ENCODE measurements at regions of chr9 and their contacts with region 1.

Region 1: GRCh38 chr9:6827439-6827838 is 69.7 kb downstream of the KDM4C start:
- DNase-seq: peak; percentile 16
- ATAC-seq: peak; percentile 81
- H3K4me3 ChIP-seq: no peak overlapping the region
- H3K27ac ChIP-seq: no peak overlapping the region
- H3K4me1 ChIP-seq: no peaks in the 10 kb centered on the region
- H3K27me3 ChIP-seq: no peaks in the 10 kb centered on the region
- CTCF ChIP-seq: peak; percentile 36 to 60 (median 47); a peak in 5 of 6 replicates
- EP300 ChIP-seq: no peak
- POLR2A ChIP-seq: no peak
- RAD21 ChIP-seq: peak; percentile 82

Region 2: GRCh38 chr9:6811436-6811835 is 16.0 kb before region 1 on chr9:
- CTCF ChIA-PET with region 1: interaction called, 10 read pairs
- POLR2A ChIA-PET with region 1: interaction called, 3 read pairs
- RAD21 ChIA-PET with region 1: interaction called, 12 read pairs
- SMC1A ChIA-PET with region 1: interaction called, 12 read pairs
- in situ Hi-C with region 1: no loop called
- intact Hi-C with region 1: no loop called
- DNase-seq: no peak
- ATAC-seq: no peak
- H3K4me3 ChIP-seq: no peak overlapping the region
- H3K27ac ChIP-seq: no peak overlapping the region
- H3K4me1 ChIP-seq: no peaks in the 10 kb centered on the region
- H3K27me3 ChIP-seq: no peaks in the 10 kb centered on the region
- CTCF ChIP-seq: no peak
- EP300 ChIP-seq: no peak
- POLR2A ChIP-seq: no peak
- RAD21 ChIP-seq: no peak

Region 3: DNA sequence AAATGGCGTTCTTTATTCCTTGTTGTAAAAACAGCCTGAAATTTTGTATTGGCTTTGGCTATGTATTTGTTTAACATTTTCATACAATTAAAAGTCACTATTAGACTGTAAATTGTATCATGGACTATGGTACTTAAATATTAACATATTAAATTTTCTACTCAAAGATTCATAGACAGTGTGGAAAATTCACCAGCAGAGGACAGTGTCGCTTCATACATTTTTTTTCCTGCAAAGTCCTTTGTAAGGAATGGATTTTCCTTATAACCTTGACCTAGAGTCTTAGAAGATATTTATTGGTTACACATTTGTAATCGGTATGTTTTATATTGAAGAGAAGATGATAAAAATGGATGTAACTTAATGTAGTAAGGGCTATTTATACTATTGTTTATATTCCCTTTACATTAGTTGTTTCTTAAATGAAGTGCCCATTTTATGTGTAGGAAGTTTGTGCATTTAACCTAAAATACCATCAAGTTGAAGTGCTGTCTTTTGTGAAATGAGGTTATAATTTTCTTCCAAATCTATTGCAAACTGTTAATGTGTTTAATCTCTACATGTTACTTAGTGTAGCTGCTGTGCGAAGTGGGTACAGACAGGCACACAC is 80.4 kb after region 1 on chr9:
- CTCF ChIA-PET with region 1: interaction called, 6 read pairs
- POLR2A ChIA-PET with region 1: no interaction called
- RAD21 ChIA-PET with region 1: interaction called, 11 read pairs
- SMC1A ChIA-PET with region 1: interaction called, 3 read pairs
- in situ Hi-C with region 1: no loop called
- intact Hi-C with region 1: no loop called
- DNase-seq: no peak
- ATAC-seq: 0 out of 3 replicates have a peak, but pooled peaks have one; percentile 17
- H3K4me3 ChIP-seq: no peak overlapping the region
- H3K27ac ChIP-seq: no peak overlapping the region
- H3K4me1 ChIP-seq: no peaks in the 10 kb centered on the region
- H3K27me3 ChIP-seq: no peaks in the 10 kb centered on the region
- CTCF ChIP-seq: peak; percentile 35 to 47 (median 42); a peak in 4 of 6 replicates
- EP300 ChIP-seq: no peak
- POLR2A ChIP-seq: no peak
- RAD21 ChIP-seq: peak; percentile 66

Region 4: GRCh38 chr9:7037176-7037575 is 209.7 kb after region 1 on chr9:
- CTCF ChIA-PET with region 1: interaction called, 10 read pairs
- POLR2A ChIA-PET with region 1: interaction called, 4 read pairs
- RAD21 ChIA-PET with region 1: no interaction called
- SMC1A ChIA-PET with region 1: no interaction called
- in situ Hi-C with region 1: no loop called
- intact Hi-C with region 1: loop called (anchors 5 kb)
- DNase-seq: no peak
- ATAC-seq: no peak
- H3K4me3 ChIP-seq: no peak overlapping the region
- H3K27ac ChIP-seq: no peak overlapping the region
- H3K4me1 ChIP-seq: no peaks in the 10 kb centered on the region
- H3K27me3 ChIP-seq: no peaks in the 10 kb centered on the region
- CTCF ChIP-seq: no peak
- EP300 ChIP-seq: no peak
- POLR2A ChIP-seq: no peak
- RAD21 ChIP-seq: no peak

Measured in GM12878 (cell line).